ENCODE measurements at regions of chr6 and their contacts with region 1.

Region 1: GRCh38 chr6:148947621-148948444 is 201.0 kb downstream of the UST start:
- DNase-seq: peak; percentile 88
- ATAC-seq: peak; percentile 85
- H3K4me3 Mint-ChIP-seq: no peak overlapping the region
- H3K27ac Mint-ChIP-seq: no peak overlapping the region
- H3K4me1 Mint-ChIP-seq: peaks cover 2% of the 10 kb centered on the region
- H3K27me3 Mint-ChIP-seq: no peaks in the 10 kb centered on the region

Region 2: GRCh38 chr6:148559848-148560433 is 387.9 kb before region 1 on chr6:
- CTCF ChIA-PET with region 1: interaction called, 3 read pairs
- POLR2A ChIA-PET with region 1: no interaction called
- intact Hi-C with region 1: loop called (anchors 1 kb)
- DNase-seq: peak; percentile 83
- ATAC-seq: peak; percentile 87
- H3K4me3 Mint-ChIP-seq: no peak overlapping the region
- H3K27ac Mint-ChIP-seq: no peak overlapping the region
- H3K4me1 Mint-ChIP-seq: peaks cover 7% of the 10 kb centered on the region
- H3K27me3 Mint-ChIP-seq: peaks cover 20% of the 10 kb centered on the region

Region 3: GRCh38 chr6:148578245-148578732 is 369.5 kb before region 1 on chr6:
- CTCF ChIA-PET with region 1: interaction called, 12 read pairs
- POLR2A ChIA-PET with region 1: no interaction called
- intact Hi-C with region 1: loop called (anchors 1 kb)
- DNase-seq: peak; percentile 74
- ATAC-seq: peak; percentile 99
- H3K4me3 Mint-ChIP-seq: no peak overlapping the region
- H3K27ac Mint-ChIP-seq: no peak overlapping the region
- H3K4me1 Mint-ChIP-seq: peaks cover 5% of the 10 kb centered on the region
- H3K27me3 Mint-ChIP-seq: peaks cover 36% of the 10 kb centered on the region

Region 4: GRCh38 chr6:148746363-148747144 is 201.3 kb before region 1 on chr6 and contains the start of gene UST:
- CTCF ChIA-PET with region 1: interaction called, 3 read pairs
- POLR2A ChIA-PET with region 1: no interaction called
- intact Hi-C with region 1: loop called (anchors 1 kb)
- DNase-seq: peak; percentile 79
- ATAC-seq: peak; percentile 59
- H3K4me3 Mint-ChIP-seq: peak within 1 kb of the TSS; percentile 87
- H3K27ac Mint-ChIP-seq: peak within 1 kb of the TSS; percentile 69
- H3K4me1 Mint-ChIP-seq: peaks cover 23% of the 10 kb centered on the region
- H3K27me3 Mint-ChIP-seq: peaks cover 40% of the 10 kb centered on the region
- total RNA-seq, gene UST: 2.2 to 2.8 TPM

Region 5: GRCh38 chr6:148835920-148836441 is 111.9 kb before region 1 on chr6:
- CTCF ChIA-PET with region 1: no interaction called
- POLR2A ChIA-PET with region 1: no interaction called
- intact Hi-C with region 1: loop called in 1 of 2 experiments (anchors 5 kb)
- DNase-seq: peak; percentile 69
- ATAC-seq: peak; percentile 80
- H3K4me3 Mint-ChIP-seq: peak overlapping the region; percentile 65
- H3K27ac Mint-ChIP-seq: peak overlapping the region; percentile 92
- H3K4me1 Mint-ChIP-seq: peaks cover 36% of the 10 kb centered on the region
- H3K27me3 Mint-ChIP-seq: peaks cover 5% of the 10 kb centered on the region

Measured in activated CD4-positive, alpha-beta T cell treated with anti-CD3 and anti-CD28 coated beads for 36 hours (primary cell).